CD4-positive, alpha-beta memory T cell (primary cell): ENCODE measurements at regions of chr12 and their contacts with region 1.

Region 1: DNA sequence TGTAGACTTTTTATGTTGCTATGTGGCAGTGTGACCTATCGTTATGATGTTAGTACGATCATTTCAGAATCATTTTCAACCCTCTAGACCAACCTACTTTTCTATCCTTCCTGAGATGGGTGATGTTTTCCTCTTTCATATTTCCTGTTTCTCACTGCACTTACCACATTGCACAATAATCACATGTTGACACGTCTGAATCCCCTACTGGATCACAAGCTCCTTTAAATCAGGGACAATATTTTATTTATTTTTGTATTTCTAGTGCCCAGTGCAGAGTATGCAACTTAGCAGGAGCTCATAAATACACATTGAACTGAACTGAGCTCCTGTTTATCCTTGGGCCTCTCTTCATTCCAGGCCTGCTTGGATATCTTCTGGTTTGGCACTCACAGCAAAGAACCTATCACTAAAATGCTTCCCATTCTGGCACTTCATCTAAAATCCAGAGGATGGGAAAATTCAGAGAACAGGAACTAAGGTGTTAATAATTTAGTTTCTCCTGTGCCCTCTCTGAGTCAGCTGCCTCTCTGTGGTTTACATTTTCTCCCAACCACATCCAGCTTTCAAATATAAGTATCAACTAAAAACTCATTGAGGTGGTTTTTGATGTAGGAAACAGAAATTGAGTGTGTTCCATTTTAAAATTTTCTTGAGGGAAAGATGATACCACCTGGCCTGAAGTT is 69.4 kb upstream of the DYRK2 start:
- DNase-seq: peak; percentile 57 to 75 (median 66)
- H3K4me3 ChIP-seq: peak overlapping the region; percentile 2 to 8
- H3K4me3 Mint-ChIP-seq: peak overlapping the region in 7 of 8 donors; percentile 75 to 89 (median 79)
- H3K27ac ChIP-seq: no peak overlapping the region
- H3K27ac Mint-ChIP-seq: peak overlapping the region; percentile 55 to 89 (median 82)
- H3K4me1 ChIP-seq: peaks cover 49% of the 10 kb centered on the region
- H3K4me1 Mint-ChIP-seq: peaks cover 41 to 65% (median 50%) of the 10 kb centered on the region in 4 donors
- H3K27me3 ChIP-seq: no peaks in the 10 kb centered on the region
- H3K27me3 Mint-ChIP-seq: no peaks in the 10 kb centered on the region

Region 2: DNA sequence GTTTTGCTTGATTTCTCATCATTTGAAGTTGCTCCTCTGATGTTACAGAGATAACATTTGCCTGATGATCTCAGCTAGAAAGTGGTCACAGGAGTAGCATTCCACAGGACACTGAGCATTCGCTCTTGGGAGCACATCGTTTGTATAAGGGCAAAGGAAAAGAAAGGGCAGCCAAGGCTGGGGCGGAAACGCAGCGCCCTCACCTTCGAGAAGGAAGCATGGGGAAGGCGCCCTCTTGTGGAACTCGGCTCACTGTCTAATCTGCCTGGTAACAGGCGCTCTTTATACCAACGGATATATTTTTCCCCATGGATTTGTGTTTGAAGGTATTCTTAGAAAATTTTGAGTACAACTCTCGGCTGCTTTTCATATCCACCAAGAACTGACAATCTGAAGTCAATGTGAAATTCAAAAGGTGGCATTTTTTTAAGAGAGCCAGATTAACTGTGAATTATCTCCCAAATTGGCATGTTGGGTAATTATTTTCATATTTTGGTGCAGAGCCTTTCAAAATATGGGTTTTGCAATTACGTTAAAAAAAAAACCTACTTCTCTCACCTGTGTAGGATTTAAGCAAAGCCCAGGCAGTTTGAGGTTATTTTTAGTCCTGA is 137.3 kb before region 1 on chr12:
- CTCF ChIA-PET with region 1: interaction called, 12 read pairs
- POLR2A ChIA-PET with region 1: interaction called, 6 read pairs
- intact Hi-C with region 1: loop called (anchors 1 kb)
- DNase-seq: peak; percentile 68 to 79 (median 68)
- H3K4me3 ChIP-seq: no peak overlapping the region
- H3K4me3 Mint-ChIP-seq: peak overlapping the region; percentile 43 to 72 (median 68)
- H3K27ac ChIP-seq: no peak overlapping the region
- H3K27ac Mint-ChIP-seq: peak overlapping the region in 6 of 7 donors; percentile 10 to 86 (median 82)
- H3K4me1 ChIP-seq: peaks cover 12% of the 10 kb centered on the region
- H3K4me1 Mint-ChIP-seq: peaks cover 21 to 35% (median 27%) of the 10 kb centered on the region in 4 donors
- H3K27me3 ChIP-seq: no peaks in the 10 kb centered on the region
- H3K27me3 Mint-ChIP-seq: no peaks in the 10 kb centered on the region

Region 3: GRCh38 chr12:67496581-67496980 is 82.5 kb before region 1 on chr12:
- CTCF ChIA-PET with region 1: no interaction called
- POLR2A ChIA-PET with region 1: no interaction called
- intact Hi-C with region 1: no loop called
- DNase-seq: no peak
- H3K4me3 ChIP-seq: no peak overlapping the region
- H3K4me3 Mint-ChIP-seq: no peak overlapping the region
- H3K27ac ChIP-seq: no peak overlapping the region
- H3K27ac Mint-ChIP-seq: no peak overlapping the region
- H3K4me1 ChIP-seq: peaks cover 8% of the 10 kb centered on the region
- H3K4me1 Mint-ChIP-seq: peaks cover 12 to 17% (median 13%) of the 10 kb centered on the region in 4 donors
- H3K27me3 ChIP-seq: no peaks in the 10 kb centered on the region
- H3K27me3 Mint-ChIP-seq: no peaks in the 10 kb centered on the region

Region 4: GRCh38 chr12:67558775-67559174 is 20.3 kb before region 1 on chr12:
- CTCF ChIA-PET with region 1: interaction called, 17 read pairs
- POLR2A ChIA-PET with region 1: interaction called, 33 read pairs
- intact Hi-C with region 1: no loop called
- DNase-seq: no peak
- H3K4me3 ChIP-seq: no peak overlapping the region
- H3K4me3 Mint-ChIP-seq: no peak overlapping the region
- H3K27ac ChIP-seq: no peak overlapping the region
- H3K27ac Mint-ChIP-seq: no peak overlapping the region
- H3K4me1 ChIP-seq: peaks cover 22% of the 10 kb centered on the region
- H3K4me1 Mint-ChIP-seq: peaks cover 0 to 18% (median 10%) of the 10 kb centered on the region in 4 donors
- H3K27me3 ChIP-seq: no peaks in the 10 kb centered on the region
- H3K27me3 Mint-ChIP-seq: no peaks in the 10 kb centered on the region

Region 5: GRCh38 chr12:67855103-67855502 is 276.0 kb after region 1 on chr12:
- CTCF ChIA-PET with region 1: no interaction called
- POLR2A ChIA-PET with region 1: no interaction called
- intact Hi-C with region 1: no loop called
- DNase-seq: no peak
- H3K4me3 ChIP-seq: no peak overlapping the region
- H3K4me3 Mint-ChIP-seq: no peak overlapping the region
- H3K27ac ChIP-seq: no peak overlapping the region
- H3K27ac Mint-ChIP-seq: no peak overlapping the region
- H3K4me1 ChIP-seq: no peaks in the 10 kb centered on the region
- H3K4me1 Mint-ChIP-seq: no peaks in the 10 kb centered on the region
- H3K27me3 ChIP-seq: no peaks in the 10 kb centered on the region
- H3K27me3 Mint-ChIP-seq: peaks cover 2 to 5% of the 10 kb centered on the region in 2 donors